Cardiac septum (tissue), 1 donor: ENCODE measurements at regions of chr3 and their contacts with region 1.

Region 1: DNA sequence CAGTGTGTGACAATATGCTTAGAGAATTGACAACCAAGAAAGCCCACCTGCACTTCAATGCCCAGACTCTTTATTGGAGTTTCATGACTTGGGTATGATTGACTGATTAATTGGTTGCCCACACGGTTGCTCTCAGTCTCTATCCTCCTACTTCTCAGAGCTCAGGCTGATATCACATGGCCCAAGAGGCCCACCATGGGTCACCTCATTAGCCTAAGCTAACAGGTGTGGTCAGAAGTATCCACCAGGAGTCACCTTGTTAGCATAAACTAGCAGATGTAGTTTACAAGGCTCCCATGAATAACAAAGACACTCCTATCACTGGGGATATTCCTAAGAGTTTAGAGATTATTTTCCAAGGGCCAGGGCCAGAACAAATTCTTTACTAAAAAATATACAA is 120.2 kb upstream of the MBNL1 start:
- DNase-seq: no peak

Region 2: GRCh38 chr3:152021916-152022461 is 126.6 kb before region 1 on chr3:
- intact Hi-C with region 1: no loop called
- DNase-seq: no peak

Region 3: GRCh38 chr3:152173627-152174026 is 25.0 kb after region 1 on chr3:
- intact Hi-C with region 1: loop called (anchors 1 kb)
- DNase-seq: no peak